Caco-2 (cell line): ENCODE measurements at regions of chr1 and their contacts with region 1.

Region 1: DNA sequence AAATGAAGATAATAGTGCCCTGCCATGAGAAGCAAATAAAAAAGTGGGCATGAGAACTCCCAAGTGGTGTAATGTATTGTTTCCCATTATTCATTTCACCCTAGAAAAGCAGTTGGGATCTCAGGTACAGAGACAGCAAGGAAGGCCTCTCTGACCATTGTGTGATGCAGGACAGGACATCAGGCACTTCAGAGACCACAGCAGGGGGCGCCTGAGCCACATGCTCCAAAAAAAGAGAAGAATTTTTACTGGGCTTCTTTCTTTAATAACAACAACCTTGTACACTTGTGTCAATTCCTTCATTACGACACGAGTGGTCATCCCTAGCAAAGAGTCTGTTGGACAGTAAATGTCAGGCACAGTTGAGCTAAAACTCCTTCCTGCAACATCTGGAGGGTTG is 533.3 kb downstream of the OMA1 start:
- DNase-seq: no peak
- H3K4me3 ChIP-seq: no peak overlapping the region
- H3K4me3 Mint-ChIP-seq: no peak overlapping the region
- H3K27ac Mint-ChIP-seq: no peak overlapping the region
- H3K4me1 ChIP-seq: no peaks in the 10 kb centered on the region
- H3K4me1 Mint-ChIP-seq: no peaks in the 10 kb centered on the region
- H3K27me3 ChIP-seq: no peaks in the 10 kb centered on the region
- H3K27me3 Mint-ChIP-seq: peaks cover 10% of the 10 kb centered on the region
- CTCF ChIP-seq: peak in 1 of 2 experiments; percentile 31

Region 2: GRCh38 chr1:57616921-57617320 is 396.3 kb before region 1 on chr1:
- CTCF ChIA-PET with region 1: no interaction called
- POLR2A ChIA-PET with region 1: no interaction called
- intact Hi-C with region 1: no loop called
- DNase-seq: no peak
- H3K4me3 ChIP-seq: no peak overlapping the region
- H3K4me3 Mint-ChIP-seq: no peak overlapping the region
- H3K27ac Mint-ChIP-seq: no peak overlapping the region
- H3K4me1 ChIP-seq: no peaks in the 10 kb centered on the region
- H3K4me1 Mint-ChIP-seq: no peaks in the 10 kb centered on the region
- H3K27me3 ChIP-seq: no peaks in the 10 kb centered on the region
- H3K27me3 Mint-ChIP-seq: no peaks in the 10 kb centered on the region
- CTCF ChIP-seq: no peak

Region 3: GRCh38 chr1:58047265-58047858 is 34.1 kb after region 1 on chr1:
- CTCF ChIA-PET with region 1: no interaction called
- POLR2A ChIA-PET with region 1: no interaction called
- intact Hi-C with region 1: loop called (anchors 2 kb)
- DNase-seq: peak in 1 of 2 experiments; percentile 39
- H3K4me3 ChIP-seq: no peak overlapping the region
- H3K4me3 Mint-ChIP-seq: no peak overlapping the region
- H3K27ac Mint-ChIP-seq: no peak overlapping the region
- H3K4me1 ChIP-seq: no peaks in the 10 kb centered on the region
- H3K4me1 Mint-ChIP-seq: no peaks in the 10 kb centered on the region
- H3K27me3 ChIP-seq: no peaks in the 10 kb centered on the region
- H3K27me3 Mint-ChIP-seq: no peaks in the 10 kb centered on the region
- CTCF ChIP-seq: peak; percentile 57 to 65

Region 4: GRCh38 chr1:58075188-58075578 is 61.9 kb after region 1 on chr1:
- CTCF ChIA-PET with region 1: no interaction called
- POLR2A ChIA-PET with region 1: no interaction called
- intact Hi-C with region 1: no loop called
- DNase-seq: no peak
- H3K4me3 ChIP-seq: no peak overlapping the region
- H3K4me3 Mint-ChIP-seq: no peak overlapping the region
- H3K27ac Mint-ChIP-seq: no peak overlapping the region
- H3K4me1 ChIP-seq: no peaks in the 10 kb centered on the region
- H3K4me1 Mint-ChIP-seq: no peaks in the 10 kb centered on the region
- H3K27me3 ChIP-seq: no peaks in the 10 kb centered on the region
- H3K27me3 Mint-ChIP-seq: no peaks in the 10 kb centered on the region
- CTCF ChIP-seq: no peak

Region 5: GRCh38 chr1:58162952-58163550 is 149.8 kb after region 1 on chr1:
- CTCF ChIA-PET with region 1: no interaction called
- POLR2A ChIA-PET with region 1: no interaction called
- intact Hi-C with region 1: loop called (anchors 5 kb)
- DNase-seq: peak; percentile 47 to 52
- H3K4me3 ChIP-seq: no peak overlapping the region
- H3K4me3 Mint-ChIP-seq: no peak overlapping the region
- H3K27ac Mint-ChIP-seq: no peak overlapping the region
- H3K4me1 ChIP-seq: no peaks in the 10 kb centered on the region
- H3K4me1 Mint-ChIP-seq: no peaks in the 10 kb centered on the region
- H3K27me3 ChIP-seq: no peaks in the 10 kb centered on the region
- H3K27me3 Mint-ChIP-seq: no peaks in the 10 kb centered on the region
- CTCF ChIP-seq: peak; percentile 45 to 70